CD4-positive, alpha-beta T cell (primary cell): ENCODE measurements at regions of chr3 and their contacts with region 1.

Region 1: GRCh38 chr3:48507351-48508061 is 3.5 kb upstream of the SHISA5 start:
- DNase-seq: peak; percentile 64 to 89 (median 74)
- ATAC-seq: peak; percentile 89
- H3K4me3 ChIP-seq: no peak overlapping the region
- H3K4me3 Mint-ChIP-seq: peak overlapping the region; percentile 59
- H3K27ac ChIP-seq: peak overlapping the region in 1 of 2 donors; percentile 45
- H3K27ac Mint-ChIP-seq: peak overlapping the region; percentile 74
- H3K4me1 ChIP-seq: peaks cover 64% of the 10 kb centered on the region
- H3K4me1 Mint-ChIP-seq: peaks cover 61% of the 10 kb centered on the region
- H3K27me3 ChIP-seq: no peaks in the 10 kb centered on the region
- H3K27me3 Mint-ChIP-seq: no peaks in the 10 kb centered on the region
- CTCF ChIP-seq: peak; percentile 86

Region 2: GRCh38 chr3:48273594-48274211 is 233.8 kb before region 1 on chr3:
- CTCF ChIA-PET with region 1: no interaction called
- POLR2A ChIA-PET with region 1: no interaction called
- intact Hi-C with region 1: loop called in 1 of 2 experiments (anchors 5 kb)
- DNase-seq: peak; percentile 23 to 82 (median 42)
- ATAC-seq: peak; percentile 35
- H3K4me3 ChIP-seq: no peak overlapping the region
- H3K4me3 Mint-ChIP-seq: no peak overlapping the region
- H3K27ac ChIP-seq: no peak overlapping the region
- H3K27ac Mint-ChIP-seq: no peak overlapping the region
- H3K4me1 ChIP-seq: peaks cover 21% of the 10 kb centered on the region
- H3K4me1 Mint-ChIP-seq: peaks cover 24% of the 10 kb centered on the region
- H3K27me3 ChIP-seq: no peaks in the 10 kb centered on the region
- H3K27me3 Mint-ChIP-seq: no peaks in the 10 kb centered on the region
- CTCF ChIP-seq: peak; percentile 73

Region 3: GRCh38 chr3:48446425-48447193 is 60.9 kb before region 1 on chr3 and contains the start of gene ATRIP:
- CTCF ChIA-PET with region 1: interaction called, 4 read pairs
- POLR2A ChIA-PET with region 1: interaction called, 6 read pairs
- intact Hi-C with region 1: loop called in 1 of 2 experiments (anchors 2 kb)
- DNase-seq: peak; percentile 71 to 93 (median 82)
- ATAC-seq: peak; percentile 98
- H3K4me3 ChIP-seq: peak within 1 kb of the TSS; percentile 88
- H3K4me3 Mint-ChIP-seq: peak within 1 kb of the TSS; percentile 93
- H3K27ac ChIP-seq: peak within 1 kb of the TSS; percentile 57 to 77
- H3K27ac Mint-ChIP-seq: peak within 1 kb of the TSS; percentile 86
- H3K4me1 ChIP-seq: peaks cover 31% of the 10 kb centered on the region
- H3K4me1 Mint-ChIP-seq: peaks cover 53% of the 10 kb centered on the region
- H3K27me3 ChIP-seq: no peaks in the 10 kb centered on the region
- H3K27me3 Mint-ChIP-seq: no peaks in the 10 kb centered on the region
- CTCF ChIP-seq: no peak
- total RNA-seq, gene ATRIP: 8.8 to 10.3 TPM

Region 4: DNA sequence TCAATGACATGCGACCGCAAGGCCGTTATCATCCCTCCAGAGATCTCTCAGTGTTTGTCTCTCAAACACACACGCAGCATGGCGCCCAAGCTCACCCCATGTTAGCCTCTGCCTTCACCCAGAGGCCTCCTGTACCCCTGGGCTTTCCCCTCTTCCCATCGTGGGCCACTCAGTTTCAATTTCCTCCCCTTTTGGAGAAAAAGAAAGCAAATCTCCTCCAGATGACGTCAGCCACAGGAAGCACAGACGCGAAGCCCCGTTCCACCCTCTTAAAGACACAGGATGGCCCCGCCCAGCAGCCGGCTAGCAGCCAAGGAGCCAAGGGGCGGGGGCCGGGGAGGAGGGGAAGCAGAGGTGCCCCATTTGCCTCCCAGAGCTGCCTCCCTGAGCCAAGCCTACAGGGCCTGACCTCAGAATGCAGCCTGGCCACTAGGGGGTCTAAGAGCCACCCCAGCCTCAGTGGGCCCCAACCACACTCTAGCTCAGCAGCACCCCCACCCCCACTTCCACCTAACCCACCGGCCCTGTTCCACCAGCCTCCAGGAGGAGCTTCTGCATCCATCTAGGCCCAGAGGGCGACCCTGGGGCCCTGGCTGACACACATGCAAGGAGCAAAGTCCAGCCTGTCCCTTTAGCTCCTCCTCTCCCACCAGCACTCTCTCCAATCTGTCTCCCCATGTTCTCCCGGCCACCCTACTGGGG is 34.4 kb before region 1 on chr3:
- CTCF ChIA-PET with region 1: interaction called, 11 read pairs
- POLR2A ChIA-PET with region 1: interaction called, 15 read pairs
- intact Hi-C with region 1: loop called in 1 of 2 experiments (anchors 1 kb)
- DNase-seq: peak; percentile 86 to 99 (median 94)
- ATAC-seq: peak; percentile 87
- H3K4me3 ChIP-seq: peak overlapping the region; percentile 63
- H3K4me3 Mint-ChIP-seq: peak overlapping the region; percentile 89
- H3K27ac ChIP-seq: peak overlapping the region; percentile 92 to 97
- H3K27ac Mint-ChIP-seq: peak overlapping the region; percentile 94
- H3K4me1 ChIP-seq: peaks cover 94% of the 10 kb centered on the region
- H3K4me1 Mint-ChIP-seq: peaks cover 48% of the 10 kb centered on the region
- H3K27me3 ChIP-seq: no peaks in the 10 kb centered on the region
- H3K27me3 Mint-ChIP-seq: no peaks in the 10 kb centered on the region
- CTCF ChIP-seq: peak; percentile 28

Region 5: GRCh38 chr3:48548729-48549705 is 41.5 kb after region 1 on chr3:
- CTCF ChIA-PET with region 1: no interaction called
- POLR2A ChIA-PET with region 1: interaction called, 5 read pairs
- intact Hi-C with region 1: loop called in 1 of 2 experiments (anchors 2 kb)
- DNase-seq: peak; percentile 72 to 90 (median 81)
- ATAC-seq: peak; percentile 99
- H3K4me3 ChIP-seq: no peak overlapping the region
- H3K4me3 Mint-ChIP-seq: no peak overlapping the region
- H3K27ac ChIP-seq: no peak overlapping the region
- H3K27ac Mint-ChIP-seq: no peak overlapping the region
- H3K4me1 ChIP-seq: peaks cover 17% of the 10 kb centered on the region
- H3K4me1 Mint-ChIP-seq: peaks cover 21% of the 10 kb centered on the region
- H3K27me3 ChIP-seq: no peaks in the 10 kb centered on the region
- H3K27me3 Mint-ChIP-seq: no peaks in the 10 kb centered on the region
- CTCF ChIP-seq: peak; percentile 82